HCT116 (cell line): ENCODE measurements at regions of chr12 and their contacts with region 1.

Region 1: DNA sequence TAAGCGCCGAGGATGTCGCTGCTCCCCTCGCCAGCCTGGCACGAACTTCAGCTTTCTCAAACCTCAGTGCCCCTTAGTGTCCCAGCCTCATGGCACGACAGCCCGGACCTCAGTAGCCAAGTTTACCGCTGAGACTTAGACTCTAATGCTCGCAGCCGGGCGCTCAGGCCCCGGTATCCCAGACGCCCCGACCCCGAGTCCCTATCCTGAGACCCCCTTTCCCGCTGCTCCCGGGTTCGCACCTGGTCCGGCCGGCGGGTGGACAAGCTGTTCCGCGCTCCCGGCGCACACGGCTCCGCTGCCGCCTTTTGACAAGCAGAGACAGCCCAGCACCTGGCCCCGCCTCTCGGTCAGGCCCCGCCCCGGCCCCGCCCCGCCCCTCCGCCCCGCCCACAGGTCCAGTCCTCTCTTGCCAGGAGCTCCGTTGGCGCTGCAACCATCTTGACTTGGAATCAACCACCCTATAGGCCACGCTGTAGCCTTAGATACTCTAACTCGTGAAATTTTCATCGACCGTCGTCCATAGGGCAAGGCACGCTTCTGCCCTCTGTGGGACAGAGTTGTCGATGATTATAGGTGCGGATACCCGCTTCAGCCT is at the start of gene VDR:
- DNase-seq: peak; percentile 87
- ATAC-seq: peak; percentile 77
- H3K4me3 ChIP-seq: peak within 1 kb of the TSS; percentile 39 to 60
- H3K27ac ChIP-seq: peak within 1 kb of the TSS; percentile 63
- H3K4me1 ChIP-seq: peaks cover 18 to 51% of the 10 kb centered on the region in 2 experiments
- H3K27me3 ChIP-seq: no peaks in the 10 kb centered on the region
- CTCF ChIP-seq: no peak; a peak in 2 of 6 replicates
- POLR2A ChIP-seq: peak; percentile 56
- RAD21 ChIP-seq: no peak
- total RNA-seq, gene VDR: 9.5 TPM

Region 2: DNA sequence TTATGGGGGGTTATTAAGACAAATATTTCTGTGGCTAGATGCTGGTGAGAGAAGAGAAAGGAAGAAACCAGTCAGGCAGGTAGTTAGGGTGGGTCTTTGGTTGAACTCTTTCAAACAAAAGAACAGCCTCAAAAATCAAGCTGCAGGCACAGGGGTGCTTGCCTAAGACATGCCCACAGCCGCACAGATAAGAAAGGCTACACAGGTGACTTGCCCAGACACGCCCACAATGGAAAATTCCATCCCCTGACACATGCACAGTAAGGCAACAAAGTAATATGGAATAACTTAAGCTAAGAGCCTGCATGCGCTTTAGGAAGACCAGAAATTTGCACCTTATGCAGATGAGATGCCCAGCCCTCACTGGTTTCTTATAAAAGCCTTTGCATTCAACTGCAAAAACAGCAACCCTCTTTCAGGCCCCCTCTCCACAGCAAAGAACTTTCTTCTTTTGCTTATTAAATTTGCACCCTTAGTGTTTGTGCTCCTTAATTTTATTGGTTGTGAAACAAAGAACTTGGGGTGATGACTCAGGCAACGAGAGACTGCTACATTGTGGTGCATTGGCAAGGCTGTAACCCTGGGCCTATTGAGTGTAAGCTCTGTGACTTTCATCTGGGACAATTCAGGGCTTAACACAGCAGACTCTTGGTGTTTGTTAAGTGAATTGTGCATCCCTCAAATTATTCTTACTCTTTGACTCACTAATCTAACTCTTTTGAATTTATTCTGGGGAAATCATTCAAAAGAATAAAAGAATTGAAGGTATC is 348.4 kb before region 1 on chr12:
- CTCF ChIA-PET with region 1: no interaction called
- POLR2A ChIA-PET with region 1: no interaction called
- RAD21 ChIA-PET with region 1: no interaction called
- intact Hi-C with region 1: no loop called
- DNase-seq: no peak
- ATAC-seq: no peak
- H3K4me3 ChIP-seq: no peak overlapping the region
- H3K27ac ChIP-seq: no peak overlapping the region; the same call in 1 of the 2 replicates
- H3K4me1 ChIP-seq: peaks cover 0 to 4% of the 10 kb centered on the region in 2 experiments; a peak in 2 of 4 replicates
- H3K27me3 ChIP-seq: no peaks in the 10 kb centered on the region
- CTCF ChIP-seq: no peak
- POLR2A ChIP-seq: no peak
- RAD21 ChIP-seq: no peak

Region 3: DNA sequence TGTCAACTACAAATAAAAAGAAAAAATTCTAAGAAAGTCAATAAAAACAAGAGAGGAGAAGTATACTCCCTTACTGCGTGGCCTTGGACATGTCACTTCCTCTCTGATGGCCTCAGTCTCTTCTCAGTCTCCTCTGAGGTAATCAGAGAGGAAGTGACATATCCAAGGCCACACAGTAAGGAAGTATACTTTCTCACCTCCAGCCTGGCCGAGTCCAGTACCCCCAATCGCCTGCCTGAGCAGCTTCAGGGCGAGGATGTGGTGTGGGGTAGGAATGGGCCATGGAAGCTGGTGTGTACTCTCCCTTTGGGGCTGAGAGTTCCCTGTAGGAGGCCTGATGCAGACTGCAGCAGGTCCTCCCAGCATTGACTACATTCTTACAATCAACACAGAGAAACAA is 15.8 kb before region 1 on chr12:
- CTCF ChIA-PET with region 1: interaction called, 12 read pairs
- POLR2A ChIA-PET with region 1: interaction called, 18 read pairs
- RAD21 ChIA-PET with region 1: no interaction called
- intact Hi-C with region 1: no loop called
- DNase-seq: no peak
- ATAC-seq: no peak
- H3K4me3 ChIP-seq: no peak overlapping the region
- H3K27ac ChIP-seq: no peak overlapping the region
- H3K4me1 ChIP-seq: no peaks in the 10 kb centered on the region
- H3K27me3 ChIP-seq: no peaks in the 10 kb centered on the region
- CTCF ChIP-seq: no peak
- POLR2A ChIP-seq: no peak
- RAD21 ChIP-seq: no peak

Region 4: GRCh38 chr12:47949441-47950308 is 44.9 kb after region 1 on chr12:
- CTCF ChIA-PET with region 1: interaction called, 17 read pairs
- POLR2A ChIA-PET with region 1: interaction called, 5 read pairs
- RAD21 ChIA-PET with region 1: interaction called, 8 to 10 read pairs
- intact Hi-C with region 1: loop called (anchors 2 kb)
- DNase-seq: peak; percentile 69
- ATAC-seq: peak; percentile 98
- H3K4me3 ChIP-seq: no peak overlapping the region
- H3K27ac ChIP-seq: no peak overlapping the region; the same call in 1 of the 2 replicates
- H3K4me1 ChIP-seq: peaks cover 12 to 46% of the 10 kb centered on the region in 2 experiments; a peak in 3 of 4 replicates
- H3K27me3 ChIP-seq: no peaks in the 10 kb centered on the region
- CTCF ChIP-seq: peak; percentile 85 to 96 (median 91)
- POLR2A ChIP-seq: no peak
- RAD21 ChIP-seq: peak; percentile 89

Region 5: GRCh38 chr12:47963340-47964040 is 58.7 kb after region 1 on chr12 and contains the start of gene TMEM106C:
- CTCF ChIA-PET with region 1: interaction called, 15 read pairs
- POLR2A ChIA-PET with region 1: interaction called, 3 read pairs
- RAD21 ChIA-PET with region 1: no interaction called
- intact Hi-C with region 1: loop called (anchors 2 kb)
- DNase-seq: peak; percentile 80
- ATAC-seq: peak; percentile 96
- H3K4me3 ChIP-seq: peak within 1 kb of the TSS; percentile 79 to 80
- H3K27ac ChIP-seq: peak within 1 kb of the TSS; percentile 73
- H3K4me1 ChIP-seq: peaks cover 3 to 13% of the 10 kb centered on the region in 2 experiments; a peak in 3 of 4 replicates
- H3K27me3 ChIP-seq: no peaks in the 10 kb centered on the region
- CTCF ChIP-seq: peak; percentile 89 to 96 (median 92)
- POLR2A ChIP-seq: peak; percentile 62
- RAD21 ChIP-seq: peak; percentile 67
- total RNA-seq, gene TMEM106C: 94.7 TPM

Region 6: GRCh38 chr12:48189331-48190125 is 284.7 kb after region 1 on chr12:
- CTCF ChIA-PET with region 1: no interaction called
- POLR2A ChIA-PET with region 1: no interaction called
- RAD21 ChIA-PET with region 1: no interaction called
- intact Hi-C with region 1: loop called (anchors 5 kb)
- DNase-seq: peak; percentile 57
- ATAC-seq: peak; percentile 77
- H3K4me3 ChIP-seq: no peak overlapping the region
- H3K27ac ChIP-seq: no peak overlapping the region
- H3K4me1 ChIP-seq: peaks cover 4 to 12% of the 10 kb centered on the region in 2 experiments; a peak in 2 of 4 replicates
- H3K27me3 ChIP-seq: no peaks in the 10 kb centered on the region
- CTCF ChIP-seq: peak; percentile 72 to 90 (median 85); a peak in 5 of 6 replicates
- POLR2A ChIP-seq: no peak
- RAD21 ChIP-seq: peak; percentile 80